AG04449 (cell line): ENCODE measurements at regions of chr18 and their contacts with region 1.

Region 1: DNA sequence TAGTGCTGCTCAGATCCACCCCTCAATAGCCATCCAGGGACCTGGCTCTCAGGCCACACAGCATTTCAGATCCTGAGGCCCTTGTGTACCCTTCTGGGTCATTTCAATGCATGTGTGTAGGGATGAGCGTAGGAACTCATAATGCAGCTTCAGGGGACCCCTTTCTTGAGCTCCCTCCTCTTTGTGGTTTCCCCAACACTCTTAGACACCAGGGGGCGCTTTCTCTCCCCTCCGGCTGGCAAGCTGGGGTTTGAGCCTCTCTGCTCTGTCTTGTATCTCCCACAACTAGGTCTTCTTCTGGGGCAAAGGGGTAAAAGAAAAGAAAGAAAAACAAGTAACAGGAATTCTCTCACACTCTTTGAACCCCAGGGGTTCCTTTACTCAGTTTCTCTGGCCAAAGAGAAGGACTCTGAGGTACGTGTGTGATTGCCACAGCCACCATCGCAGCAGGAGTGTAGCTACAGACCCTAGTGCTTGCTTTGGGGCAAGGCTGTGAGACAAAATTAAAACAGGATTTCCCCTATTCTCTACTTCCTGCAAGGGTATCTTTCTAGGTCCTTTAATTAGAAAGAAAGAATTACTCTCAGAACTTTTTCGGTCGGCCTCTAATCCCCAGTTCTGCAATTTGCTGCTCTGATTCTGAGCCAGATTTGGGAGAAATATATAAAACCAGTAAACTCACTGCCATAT is 38.0 kb downstream of the CABYR start:
- DNase-seq: no peak
- H3K4me3 ChIP-seq: no peak overlapping the region
- CTCF ChIP-seq: peak; percentile 80

Region 2: DNA sequence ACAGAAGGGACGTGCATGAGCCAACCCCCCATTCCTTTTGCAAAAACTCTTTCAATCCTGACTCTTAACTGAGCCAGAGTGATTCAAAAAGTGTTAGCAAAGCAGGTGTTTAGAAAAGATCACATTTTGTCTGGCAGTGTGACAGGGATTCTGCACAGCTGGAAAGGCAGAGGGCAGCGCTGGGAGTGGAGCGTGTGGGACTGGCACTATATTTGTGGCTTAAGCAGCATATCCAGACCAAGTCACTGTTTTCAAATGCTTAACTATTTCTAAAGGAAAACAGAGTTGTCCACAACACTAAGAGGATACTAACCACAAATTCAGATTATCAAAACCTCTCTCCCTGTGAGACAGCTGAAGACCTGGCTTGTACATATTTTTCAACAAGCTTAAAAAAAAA is 19.0 kb before region 1 on chr18:
- CTCF ChIA-PET with region 1: interaction called, 16 read pairs
- POLR2A ChIA-PET with region 1: no interaction called
- DNase-seq: no peak
- H3K4me3 ChIP-seq: no peak overlapping the region
- CTCF ChIP-seq: no peak

Region 3: DNA sequence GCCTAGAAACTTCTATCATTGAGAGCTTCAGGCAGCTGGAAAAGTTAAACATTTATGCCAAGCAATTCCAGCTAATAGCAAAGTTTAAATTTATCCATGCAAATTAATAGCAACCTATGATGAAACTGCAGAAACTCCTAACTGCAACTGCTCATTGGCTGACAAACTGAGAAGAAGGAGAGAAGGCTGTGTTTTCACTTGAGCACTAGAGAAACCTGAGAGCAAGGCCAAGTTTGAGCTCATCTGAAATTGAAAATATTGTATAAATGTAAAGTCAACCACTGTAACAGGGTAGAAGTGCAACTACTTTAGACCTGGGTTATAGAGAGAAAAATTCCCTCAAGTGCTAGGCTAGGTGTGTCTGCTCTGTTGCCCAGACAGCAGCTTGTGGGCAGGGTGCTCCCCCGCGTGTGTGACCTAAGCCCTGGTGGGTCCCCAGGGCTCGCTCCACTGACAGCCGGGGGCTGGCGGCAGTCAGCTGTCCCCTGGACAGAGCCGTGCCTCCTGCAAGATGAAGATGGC is 12.2 kb after region 1 on chr18:
- CTCF ChIA-PET with region 1: interaction called, 79 read pairs
- POLR2A ChIA-PET with region 1: no interaction called
- DNase-seq: no peak
- H3K4me3 ChIP-seq: no peak overlapping the region
- CTCF ChIP-seq: no peak

Region 4: GRCh38 chr18:24198461-24198860 is 21.6 kb after region 1 on chr18:
- CTCF ChIA-PET with region 1: interaction called, 79 read pairs
- POLR2A ChIA-PET with region 1: no interaction called
- DNase-seq: no peak
- H3K4me3 ChIP-seq: no peak overlapping the region
- CTCF ChIP-seq: no peak

Region 5: DNA sequence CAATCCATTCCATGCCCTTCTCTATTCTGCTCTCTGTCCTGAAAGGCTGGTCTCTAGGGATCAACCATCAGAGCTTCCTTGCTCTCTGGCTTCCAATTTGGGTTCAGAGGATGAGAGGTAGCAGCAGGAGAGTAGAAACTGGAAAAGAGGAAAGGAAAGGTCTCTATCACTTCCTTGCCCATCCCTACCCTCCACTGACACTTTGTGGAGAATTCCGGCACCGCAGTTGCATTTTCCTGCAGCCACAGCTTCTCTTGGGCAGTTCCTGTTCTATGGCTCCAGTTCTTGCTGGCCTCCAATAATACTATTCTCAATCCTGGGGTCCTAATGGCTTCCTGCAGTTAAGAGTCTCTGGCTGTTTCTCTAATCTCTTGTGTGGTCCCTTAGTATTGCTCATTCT is 236.3 kb after region 1 on chr18:
- CTCF ChIA-PET with region 1: interaction called, 23 read pairs
- POLR2A ChIA-PET with region 1: no interaction called
- DNase-seq: no peak
- H3K4me3 ChIP-seq: no peak overlapping the region
- CTCF ChIP-seq: peak; percentile 49